ENCODE measurements at regions of chr17 and their contacts with region 1.

Region 1: DNA sequence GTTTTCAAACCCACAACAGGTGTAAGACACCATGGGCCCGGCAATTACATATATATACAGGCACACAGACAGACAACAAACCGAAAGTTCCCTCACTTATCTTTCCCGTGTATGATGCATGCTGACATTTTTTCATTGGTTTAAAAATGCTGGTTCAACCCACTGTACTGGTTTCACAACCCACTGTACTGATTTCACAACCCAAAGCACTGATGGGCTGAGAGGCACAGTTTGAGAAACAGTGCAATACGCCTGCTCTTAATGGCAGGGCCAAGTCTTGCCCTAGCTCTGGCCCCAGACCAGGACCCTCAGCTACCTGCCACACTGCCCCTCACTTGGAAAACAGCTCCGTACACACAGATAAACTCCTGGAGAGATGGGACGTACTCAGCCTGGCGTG is 81.4 kb downstream of the ABR start:
- DNase-seq: peak in 1 of 2 experiments; percentile 21
- H3K4me3 ChIP-seq: no peak overlapping the region
- H3K4me3 Mint-ChIP-seq: no peak overlapping the region
- H3K27ac Mint-ChIP-seq: no peak overlapping the region
- H3K4me1 ChIP-seq: no peaks in the 10 kb centered on the region; the same call in 1 of the 2 replicates
- H3K4me1 Mint-ChIP-seq: no peaks in the 10 kb centered on the region
- H3K27me3 ChIP-seq: no peaks in the 10 kb centered on the region
- H3K27me3 Mint-ChIP-seq: no peaks in the 10 kb centered on the region
- CTCF ChIP-seq: no peak

Region 2: DNA sequence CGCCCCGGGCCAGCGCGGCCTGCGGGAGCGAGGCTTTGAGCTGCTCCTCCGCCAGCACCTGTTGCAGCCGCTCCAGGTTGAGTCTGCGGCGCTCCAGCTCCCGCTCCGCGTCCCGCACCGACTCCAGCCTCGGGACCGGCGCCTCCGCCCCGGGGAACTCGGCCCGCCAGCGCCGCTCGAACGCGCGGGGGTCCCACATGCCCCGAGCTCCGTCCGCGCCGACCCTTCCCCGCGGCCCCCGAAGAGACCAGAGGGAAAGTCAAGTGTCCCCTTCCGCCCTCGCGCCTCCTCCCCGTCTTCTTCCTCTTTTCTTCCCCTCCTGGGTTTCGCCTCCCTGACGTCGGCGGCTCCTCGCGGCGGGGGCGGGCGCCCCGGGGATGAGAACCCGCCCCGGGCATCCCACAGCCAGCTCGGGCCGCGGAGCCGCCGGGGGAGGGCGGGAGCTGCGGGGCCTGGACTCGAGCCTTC is 131.1 kb after region 1 on chr17:
- CTCF ChIA-PET with region 1: no interaction called
- POLR2A ChIA-PET with region 1: interaction called, 10 read pairs
- intact Hi-C with region 1: no loop called
- DNase-seq: peak; percentile 59 to 71
- H3K4me3 ChIP-seq: peak overlapping the region; percentile 79
- H3K4me3 Mint-ChIP-seq: peak overlapping the region; percentile 77
- H3K27ac Mint-ChIP-seq: peak overlapping the region; percentile 72
- H3K4me1 ChIP-seq: peaks cover 8% of the 10 kb centered on the region
- H3K4me1 Mint-ChIP-seq: peaks cover 31% of the 10 kb centered on the region
- H3K27me3 ChIP-seq: no peaks in the 10 kb centered on the region
- H3K27me3 Mint-ChIP-seq: peaks cover 7% of the 10 kb centered on the region
- CTCF ChIP-seq: no peak

Measured in Caco-2 (cell line).